Heart right ventricle (tissue), 16 donors: ENCODE measurements at regions of chr5 and their contacts with region 1.

Region 1: DNA sequence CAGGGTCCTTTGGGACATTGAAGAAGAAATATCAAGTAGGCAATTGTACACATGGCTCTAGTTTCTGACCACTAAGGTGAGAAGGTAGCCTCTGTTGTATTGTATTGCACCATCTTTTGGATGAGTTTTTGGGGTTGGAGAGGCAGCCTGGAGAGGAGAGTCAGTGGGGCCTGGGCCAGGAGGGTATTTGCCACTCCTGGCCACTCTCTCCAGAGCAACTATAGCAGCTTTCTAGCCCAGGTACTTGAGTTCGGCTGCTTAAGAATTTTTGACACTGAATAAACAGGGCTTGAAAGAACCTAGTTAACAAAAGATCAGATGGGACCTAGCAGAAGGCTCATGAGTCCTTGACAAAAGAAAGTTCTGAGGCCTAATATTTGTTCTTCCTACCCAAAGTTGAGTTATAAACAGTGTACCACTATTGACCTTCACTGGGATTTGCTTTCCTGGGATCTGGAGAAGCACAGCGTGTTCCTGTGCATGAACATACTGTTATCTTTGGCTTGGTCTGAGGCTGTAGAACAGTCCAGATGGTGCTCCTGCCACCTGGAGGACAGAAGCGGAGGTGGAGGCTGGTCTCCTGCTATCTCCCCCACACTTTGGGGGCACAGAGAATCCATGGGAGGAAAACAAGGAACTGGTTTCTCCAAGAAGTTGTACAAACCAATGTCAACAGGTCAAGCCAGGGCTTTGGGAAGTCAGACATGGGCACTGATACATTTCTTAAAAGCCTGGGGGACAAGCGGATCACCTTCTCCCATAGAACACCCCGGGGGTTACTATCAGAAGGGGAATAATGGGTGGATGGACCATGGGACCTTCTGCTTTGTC is 110.4 kb upstream of the LIFR start:
- DNase-seq: peak; percentile 44 to 51
- ATAC-seq: peak; percentile 87 to 97 (median 92)
- H3K4me3 ChIP-seq: no peak overlapping the region
- H3K27ac ChIP-seq: peak overlapping the region in 5 of 10 donors; percentile 1 to 42 (median 31)
- H3K4me1 ChIP-seq: peaks cover 2 to 30% (median 20%) of the 10 kb centered on the region in 9 donors
- H3K27me3 ChIP-seq: no peaks in the 10 kb centered on the region
- CTCF ChIP-seq: peak; percentile 55 to 85 (median 75)

Region 2: DNA sequence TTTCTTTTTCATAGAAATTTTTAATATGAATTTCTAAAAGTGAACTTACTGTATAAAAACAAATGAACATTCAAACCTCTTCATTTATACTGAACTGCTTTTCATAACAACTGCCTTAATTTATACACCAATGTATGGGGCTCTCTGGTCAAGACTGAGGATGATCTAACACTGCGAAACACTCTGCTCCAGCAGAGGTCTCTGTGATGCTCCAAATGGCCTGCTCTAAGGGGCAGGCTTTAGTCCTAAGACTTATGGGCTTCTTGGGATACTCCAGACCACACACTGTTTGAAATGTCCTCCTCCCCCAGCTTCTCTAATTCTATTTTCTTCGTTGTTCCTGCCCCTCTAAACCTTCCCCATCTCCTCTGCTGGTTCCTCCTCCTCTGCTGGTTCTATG is 168.9 kb before region 1 on chr5:
- intact Hi-C with region 1: loop called in 1 of 10 experiments (anchors 10 kb)
- DNase-seq: no peak
- ATAC-seq: peak in 4 of 8 donors; percentile 51 to 61 (median 59)
- H3K4me3 ChIP-seq: no peak overlapping the region
- H3K27ac ChIP-seq: no peak overlapping the region
- H3K4me1 ChIP-seq: no peaks in the 10 kb centered on the region
- H3K27me3 ChIP-seq: no peaks in the 10 kb centered on the region
- CTCF ChIP-seq: peak in 5 of 9 donors; percentile 8 to 48 (median 36)

Region 3: DNA sequence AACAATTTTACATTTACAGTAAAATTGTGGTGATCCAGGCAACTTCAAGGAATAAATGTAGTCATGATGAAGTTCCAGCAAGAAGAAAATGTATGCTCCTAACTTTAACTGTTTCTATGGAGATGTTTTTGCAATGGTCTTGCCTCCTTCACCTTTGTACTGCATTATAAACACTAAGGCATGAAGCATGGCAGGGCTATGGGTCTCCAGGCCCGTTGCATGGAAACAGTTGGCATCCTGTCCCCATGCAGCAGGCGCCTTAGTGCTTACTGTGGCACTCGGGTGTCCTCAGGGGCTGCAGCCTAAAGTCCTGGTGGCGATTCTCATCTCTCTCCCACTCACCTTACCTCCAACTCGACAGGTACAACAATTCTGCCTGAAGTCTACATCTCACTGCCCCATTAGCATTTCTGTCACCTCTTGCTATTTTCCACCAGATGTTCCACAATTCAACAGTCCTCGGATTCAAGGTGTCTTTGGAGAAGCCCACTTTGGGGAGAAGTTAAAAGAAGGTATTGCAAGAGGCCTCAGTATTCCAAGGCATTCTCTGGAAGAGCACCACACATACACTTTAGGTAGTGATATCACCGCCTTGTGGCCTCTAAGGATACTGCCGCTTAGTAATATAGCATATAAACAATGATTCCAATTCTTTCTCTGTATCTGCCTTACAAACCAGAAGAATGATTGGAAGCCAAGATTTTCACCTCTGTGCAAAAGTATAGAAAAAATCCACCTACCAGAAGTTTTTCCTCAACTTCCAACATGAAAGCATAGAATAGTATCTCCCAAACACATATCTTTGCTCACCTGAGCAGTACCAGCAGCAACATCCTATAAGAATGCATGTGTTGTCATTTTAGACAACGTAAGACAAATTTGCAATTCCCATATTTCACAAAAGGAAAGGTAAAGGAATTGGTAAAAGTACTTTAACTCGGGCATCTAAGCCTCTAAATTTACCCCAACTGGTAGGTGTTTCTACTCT is 115.6 kb before region 1 on chr5:
- intact Hi-C with region 1: loop called in 6 of 10 experiments (anchors 2 to 5 kb)
- DNase-seq: no peak
- ATAC-seq: peak in 5 of 8 donors; percentile 44 to 62 (median 52)
- H3K4me3 ChIP-seq: no peak overlapping the region
- H3K27ac ChIP-seq: peak overlapping the region in 5 of 10 donors; percentile 2 to 45 (median 33)
- H3K4me1 ChIP-seq: peaks cover 0 to 84% (median 53%) of the 10 kb centered on the region in 9 donors
- H3K27me3 ChIP-seq: peaks cover 0 to 39% (median 0%) of the 10 kb centered on the region in 7 donors
- CTCF ChIP-seq: peak; percentile 17 to 71 (median 58)

Region 4: DNA sequence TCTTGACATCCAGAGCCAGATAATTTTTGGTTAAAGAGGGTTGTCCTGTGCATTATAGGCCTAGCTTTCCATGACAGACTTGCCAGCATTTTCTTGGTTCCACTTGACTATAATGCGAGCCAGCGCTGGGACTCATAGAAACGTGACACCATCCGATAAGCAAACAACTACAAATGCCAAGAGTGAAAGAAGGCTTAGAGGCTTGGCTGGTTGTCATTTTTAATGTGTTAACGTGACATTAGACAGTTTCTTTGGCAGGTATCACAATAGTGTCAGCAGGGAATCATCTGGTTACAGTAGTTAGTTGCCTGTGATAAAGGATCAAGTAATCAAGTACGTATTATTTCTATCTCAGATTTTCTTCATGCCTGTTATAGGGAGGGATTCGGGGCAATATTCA is 90.4 kb before region 1 on chr5:
- intact Hi-C with region 1: loop called in 1 of 10 experiments (anchors 10 kb)
- DNase-seq: peak in 1 of 2 donors; percentile 49
- ATAC-seq: peak; percentile 72 to 96 (median 94)
- H3K4me3 ChIP-seq: no peak overlapping the region
- H3K27ac ChIP-seq: peak overlapping the region in 7 of 10 donors; percentile 15 to 69 (median 53)
- H3K4me1 ChIP-seq: peaks cover 0 to 16% (median 0%) of the 10 kb centered on the region in 9 donors
- H3K27me3 ChIP-seq: no peaks in the 10 kb centered on the region
- CTCF ChIP-seq: no peak